ENCODE measurements at regions of chr1 and their contacts with region 1.

Region 1: GRCh38 chr1:70354332-70355110 is at the start of gene ANKRD13C:
- DNase-seq: peak; percentile 81 to 97 (median 95)
- ATAC-seq: peak; percentile 93
- H3K4me3 ChIP-seq: peak within 1 kb of the TSS; percentile 80
- H3K4me3 Mint-ChIP-seq: peak within 1 kb of the TSS; percentile 87 to 99 (median 95)
- H3K27ac ChIP-seq: peak within 1 kb of the TSS; percentile 92
- H3K27ac Mint-ChIP-seq: peak within 1 kb of the TSS; percentile 96 to 100 (median 98)
- H3K4me1 ChIP-seq: peaks cover 4 to 29% of the 10 kb centered on the region in 2 donors
- H3K4me1 Mint-ChIP-seq: peaks cover 37 to 63% (median 48%) of the 10 kb centered on the region in 7 donors
- H3K27me3 ChIP-seq: no peaks in the 10 kb centered on the region
- H3K27me3 Mint-ChIP-seq: no peaks in the 10 kb centered on the region
- total RNA-seq, gene ANKRD13C: 23.8 to 31.4 (median 28.1) TPM

Region 2: DNA sequence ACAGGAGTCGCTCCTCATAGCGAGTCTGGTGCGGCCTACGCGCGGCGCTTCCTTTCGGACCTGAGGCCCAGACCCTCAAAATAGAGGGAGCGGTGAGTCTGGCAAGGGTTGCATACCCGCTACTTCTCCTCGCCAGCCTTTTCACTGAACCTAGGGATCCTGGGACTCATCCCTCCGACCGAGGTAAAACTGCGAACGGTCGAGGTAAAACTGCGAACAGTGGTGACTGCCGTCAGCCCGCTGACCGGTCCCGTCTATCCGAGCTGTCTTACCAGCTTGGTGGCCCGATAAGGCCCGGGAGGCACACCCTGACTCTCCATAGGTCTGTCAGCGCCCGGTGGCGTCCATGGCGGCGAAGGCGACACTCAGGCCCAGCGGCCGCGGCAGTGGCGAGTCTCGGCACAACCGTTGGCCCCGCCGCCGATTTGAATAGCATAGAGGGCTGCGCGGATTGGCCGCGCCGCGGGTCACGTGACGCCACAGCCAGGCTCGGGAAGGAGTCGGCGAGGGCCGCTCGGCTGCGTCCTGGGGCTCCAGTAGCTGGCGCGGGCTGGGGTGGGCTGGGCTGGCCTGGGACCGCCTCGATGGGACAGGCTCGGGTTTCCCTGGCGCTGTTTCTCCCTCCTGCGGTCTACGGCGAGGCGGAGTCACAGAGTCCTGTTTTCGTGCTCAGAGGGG is 1857.7 kb before region 1 on chr1 and contains the start of gene DEPDC1:
- CTCF ChIA-PET with region 1: no interaction called
- POLR2A ChIA-PET with region 1: no interaction called
- intact Hi-C with region 1: loop called in 1 of 2 experiments (anchors 10 kb)
- DNase-seq: peak; percentile 10 to 91 (median 42)
- ATAC-seq: peak; percentile 94
- H3K4me3 ChIP-seq: peak within 1 kb of the TSS; percentile 70
- H3K4me3 Mint-ChIP-seq: peak within 1 kb of the TSS; percentile 68 to 94 (median 81)
- H3K27ac ChIP-seq: no peak within 1 kb of the TSS
- H3K27ac Mint-ChIP-seq: peak within 1 kb of the TSS in 1 of 9 donors; percentile 87
- H3K4me1 ChIP-seq: peaks cover 0 to 5% of the 10 kb centered on the region in 2 donors
- H3K4me1 Mint-ChIP-seq: peaks cover 0 to 35% (median 13%) of the 10 kb centered on the region in 7 donors
- H3K27me3 ChIP-seq: no peaks in the 10 kb centered on the region
- H3K27me3 Mint-ChIP-seq: peaks cover 20 to 39% (median 25%) of the 10 kb centered on the region in 5 donors
- total RNA-seq, gene DEPDC1: 0.13 to 12.6 (median 0.24) TPM in 3 of 5 experiments, not detected in the others

Region 3: GRCh38 chr1:70205434-70206118 is 148.9 kb before region 1 on chr1 and contains the start of gene LRRC40:
- CTCF ChIA-PET with region 1: no interaction called
- POLR2A ChIA-PET with region 1: interaction called, 16 read pairs
- intact Hi-C with region 1: loop called (anchors 1 kb)
- DNase-seq: peak; percentile 92 to 98 (median 95)
- ATAC-seq: peak; percentile 99
- H3K4me3 ChIP-seq: peak within 1 kb of the TSS; percentile 85
- H3K4me3 Mint-ChIP-seq: peak within 1 kb of the TSS; percentile 87 to 99 (median 98)
- H3K27ac ChIP-seq: peak within 1 kb of the TSS; percentile 96
- H3K27ac Mint-ChIP-seq: peak within 1 kb of the TSS; percentile 95 to 100 (median 99)
- H3K4me1 ChIP-seq: peaks cover 21 to 22% of the 10 kb centered on the region in 2 donors
- H3K4me1 Mint-ChIP-seq: peaks cover 44 to 92% (median 78%) of the 10 kb centered on the region in 7 donors
- H3K27me3 ChIP-seq: no peaks in the 10 kb centered on the region
- H3K27me3 Mint-ChIP-seq: no peaks in the 10 kb centered on the region
- total RNA-seq, gene LRRC40: 10.3 to 19.2 (median 12.1) TPM

Region 4: GRCh38 chr1:70221241-70222121 is 133.0 kb before region 1 on chr1 and contains the start of gene SRSF11:
- CTCF ChIA-PET with region 1: interaction called, 4 read pairs
- POLR2A ChIA-PET with region 1: interaction called, 28 read pairs
- intact Hi-C with region 1: loop called (anchors 1 kb)
- DNase-seq: peak; percentile 93 to 98 (median 96)
- ATAC-seq: peak; percentile 98
- H3K4me3 ChIP-seq: peak within 1 kb of the TSS; percentile 85
- H3K4me3 Mint-ChIP-seq: peak within 1 kb of the TSS; percentile 86 to 95 (median 91)
- H3K27ac ChIP-seq: peak within 1 kb of the TSS; percentile 95
- H3K27ac Mint-ChIP-seq: peak within 1 kb of the TSS; percentile 92 to 99 (median 96)
- H3K4me1 ChIP-seq: peaks cover 22 to 32% of the 10 kb centered on the region in 2 donors
- H3K4me1 Mint-ChIP-seq: peaks cover 29 to 65% (median 54%) of the 10 kb centered on the region in 7 donors
- H3K27me3 ChIP-seq: no peaks in the 10 kb centered on the region
- H3K27me3 Mint-ChIP-seq: peaks cover 0 to 2% (median 0%) of the 10 kb centered on the region in 5 donors
- total RNA-seq, gene SRSF11: 190 to 413 (median 372) TPM

Region 5: GRCh38 chr1:70319750-70320149 is 34.8 kb before region 1 on chr1:
- CTCF ChIA-PET with region 1: no interaction called
- POLR2A ChIA-PET with region 1: no interaction called
- intact Hi-C with region 1: loop called in 1 of 2 experiments (anchors 2 kb)
- DNase-seq: no peak
- ATAC-seq: no peak
- H3K4me3 ChIP-seq: no peak overlapping the region
- H3K4me3 Mint-ChIP-seq: no peak overlapping the region
- H3K27ac ChIP-seq: no peak overlapping the region
- H3K27ac Mint-ChIP-seq: peak overlapping the region in 2 of 9 donors; percentile 1 to 14
- H3K4me1 ChIP-seq: no peaks in the 10 kb centered on the region
- H3K4me1 Mint-ChIP-seq: peaks cover 10 to 35% (median 21%) of the 10 kb centered on the region in 7 donors
- H3K27me3 ChIP-seq: no peaks in the 10 kb centered on the region
- H3K27me3 Mint-ChIP-seq: no peaks in the 10 kb centered on the region

Region 6: DNA sequence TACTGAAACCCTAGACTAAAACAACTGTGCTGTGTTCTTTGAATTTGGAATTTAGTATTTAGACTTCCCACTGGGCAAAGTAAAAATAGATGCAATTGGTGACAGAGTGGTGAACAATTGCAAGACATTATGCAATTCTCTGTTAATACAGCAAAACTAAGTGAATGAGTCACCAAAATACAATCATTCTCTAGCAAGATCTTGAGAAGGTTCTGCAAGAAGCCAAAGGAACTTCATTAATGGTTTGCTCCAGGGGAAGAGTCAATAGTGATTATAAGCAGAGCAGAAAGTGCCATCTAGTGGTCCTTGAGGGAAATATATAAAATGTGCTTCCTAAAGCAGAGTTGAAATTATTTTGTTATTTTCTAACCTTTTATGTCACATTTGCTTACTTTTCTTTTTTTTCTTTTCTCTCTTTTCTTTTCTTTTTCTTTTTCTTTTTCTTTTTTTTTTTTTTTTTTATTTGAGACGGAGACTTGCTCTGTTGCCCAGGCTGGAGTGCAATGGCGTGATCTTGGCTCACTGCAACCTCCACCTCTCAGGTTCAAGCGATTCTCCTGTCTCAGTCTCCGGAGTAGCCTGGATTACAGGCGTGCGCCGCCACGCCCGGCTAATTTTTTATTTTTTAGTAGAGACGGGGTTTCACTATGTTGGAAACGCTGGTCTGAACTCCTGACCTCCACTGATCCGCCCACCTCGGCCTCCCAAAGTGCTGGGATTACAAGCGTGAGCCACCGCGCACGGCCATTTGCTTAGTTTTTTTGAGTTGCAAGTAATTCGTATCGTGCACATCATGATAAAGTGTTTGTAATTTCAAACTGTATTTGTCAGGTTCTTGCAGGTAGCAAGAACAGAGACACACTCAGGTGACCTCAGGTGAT is 155.7 kb after region 1 on chr1:
- CTCF ChIA-PET with region 1: no interaction called
- POLR2A ChIA-PET with region 1: no interaction called
- intact Hi-C with region 1: loop called in 1 of 2 experiments (anchors 10 kb)
- DNase-seq: peak in 7 of 9 donors; percentile 12 to 49 (median 25)
- ATAC-seq: peak; percentile 79
- H3K4me3 ChIP-seq: no peak overlapping the region
- H3K4me3 Mint-ChIP-seq: no peak overlapping the region
- H3K27ac ChIP-seq: no peak overlapping the region
- H3K27ac Mint-ChIP-seq: no peak overlapping the region
- H3K4me1 ChIP-seq: no peaks in the 10 kb centered on the region
- H3K4me1 Mint-ChIP-seq: no peaks in the 10 kb centered on the region
- H3K27me3 ChIP-seq: no peaks in the 10 kb centered on the region
- H3K27me3 Mint-ChIP-seq: peaks cover 0 to 21% (median 6%) of the 10 kb centered on the region in 5 donors

Region 7: GRCh38 chr1:71080739-71081696 is 726.5 kb after region 1 on chr1 and contains the start of gene ZRANB2:
- CTCF ChIA-PET with region 1: no interaction called
- POLR2A ChIA-PET with region 1: interaction called, 9 read pairs
- intact Hi-C with region 1: loop called (anchors 1 kb)
- DNase-seq: peak; percentile 74 to 96 (median 94)
- ATAC-seq: peak; percentile 98
- H3K4me3 ChIP-seq: peak within 1 kb of the TSS; percentile 87
- H3K4me3 Mint-ChIP-seq: peak within 1 kb of the TSS; percentile 93 to 100 (median 99)
- H3K27ac ChIP-seq: peak within 1 kb of the TSS; percentile 95
- H3K27ac Mint-ChIP-seq: peak within 1 kb of the TSS; percentile 98 to 100 (median 99)
- H3K4me1 ChIP-seq: peaks cover 15 to 19% of the 10 kb centered on the region in 2 donors
- H3K4me1 Mint-ChIP-seq: peaks cover 7 to 55% (median 39%) of the 10 kb centered on the region in 7 donors
- H3K27me3 ChIP-seq: no peaks in the 10 kb centered on the region
- H3K27me3 Mint-ChIP-seq: peaks cover 12 to 28% (median 17%) of the 10 kb centered on the region in 5 donors
- total RNA-seq, gene ZRANB2: 84.9 to 167 (median 121) TPM